GM12878 (cell line): ENCODE measurements at regions of chr10 and their contacts with region 1.

Region 1: GRCh38 chr10:60335708-60336107 is 54.0 kb downstream of the ANK3 start:
- DNase-seq: no peak
- ATAC-seq: peak; percentile 68
- H3K4me3 ChIP-seq: no peak overlapping the region
- H3K27ac ChIP-seq: no peak overlapping the region
- H3K4me1 ChIP-seq: no peaks in the 10 kb centered on the region
- H3K27me3 ChIP-seq: no peaks in the 10 kb centered on the region
- CTCF ChIP-seq: peak; percentile 26 to 48 (median 30); a peak in 4 of 6 replicates
- EP300 ChIP-seq: no peak
- POLR2A ChIP-seq: no peak
- RAD21 ChIP-seq: peak; percentile 64

Region 2: DNA sequence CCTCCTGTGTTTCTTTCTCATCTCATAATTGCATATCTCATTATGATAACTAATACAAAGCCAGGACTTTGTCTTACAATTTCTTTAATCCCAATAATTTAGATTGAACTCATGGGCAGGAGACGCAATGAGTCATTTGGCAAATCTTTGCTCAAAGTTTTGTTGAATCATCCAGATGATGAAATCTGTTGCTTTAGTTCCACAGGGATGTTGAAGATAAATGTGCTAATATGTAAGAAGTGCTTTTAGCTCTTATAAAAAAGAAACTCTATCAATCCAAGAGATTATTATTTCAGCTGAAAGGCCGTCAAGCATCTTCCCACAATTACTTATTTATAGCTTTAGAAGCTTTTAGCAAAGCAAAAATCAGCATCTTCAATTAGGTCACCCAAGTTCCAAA is 90.7 kb after region 1 on chr10:
- CTCF ChIA-PET with region 1: interaction called, 57 read pairs
- POLR2A ChIA-PET with region 1: no interaction called
- RAD21 ChIA-PET with region 1: interaction called, 3 read pairs
- SMC1A ChIA-PET with region 1: interaction called, 9 read pairs
- in situ Hi-C with region 1: no loop called
- intact Hi-C with region 1: no loop called
- DNase-seq: no peak
- ATAC-seq: no peak
- H3K4me3 ChIP-seq: no peak overlapping the region
- H3K27ac ChIP-seq: no peak overlapping the region
- H3K4me1 ChIP-seq: no peaks in the 10 kb centered on the region
- H3K27me3 ChIP-seq: no peaks in the 10 kb centered on the region
- CTCF ChIP-seq: no peak
- EP300 ChIP-seq: no peak
- POLR2A ChIP-seq: no peak
- RAD21 ChIP-seq: no peak

Region 3: GRCh38 chr10:60434418-60435046 is 98.8 kb after region 1 on chr10:
- CTCF ChIA-PET with region 1: interaction called, 57 read pairs
- POLR2A ChIA-PET with region 1: no interaction called
- RAD21 ChIA-PET with region 1: interaction called, 24 read pairs
- SMC1A ChIA-PET with region 1: interaction called, 29 read pairs
- in situ Hi-C with region 1: no loop called
- intact Hi-C with region 1: loop called (anchors 1 kb)
- DNase-seq: no peak
- ATAC-seq: peak; percentile 64
- H3K4me3 ChIP-seq: no peak overlapping the region
- H3K27ac ChIP-seq: no peak overlapping the region
- H3K4me1 ChIP-seq: no peaks in the 10 kb centered on the region
- H3K27me3 ChIP-seq: no peaks in the 10 kb centered on the region
- CTCF ChIP-seq: peak; percentile 42 to 69 (median 46); a peak in 5 of 6 replicates
- EP300 ChIP-seq: no peak
- POLR2A ChIP-seq: no peak
- RAD21 ChIP-seq: peak; percentile 93

Region 4: GRCh38 chr10:60444494-60445064 is 108.9 kb after region 1 on chr10:
- CTCF ChIA-PET with region 1: interaction called, 19 read pairs
- POLR2A ChIA-PET with region 1: no interaction called
- RAD21 ChIA-PET with region 1: no interaction called
- SMC1A ChIA-PET with region 1: interaction called, 4 read pairs
- in situ Hi-C with region 1: no loop called
- intact Hi-C with region 1: no loop called
- DNase-seq: no peak
- ATAC-seq: no peak
- H3K4me3 ChIP-seq: no peak overlapping the region
- H3K27ac ChIP-seq: no peak overlapping the region
- H3K4me1 ChIP-seq: no peaks in the 10 kb centered on the region
- H3K27me3 ChIP-seq: no peaks in the 10 kb centered on the region
- CTCF ChIP-seq: no peak; a peak in 1 of 6 replicates
- EP300 ChIP-seq: no peak
- POLR2A ChIP-seq: no peak
- RAD21 ChIP-seq: peak; percentile 30; the same call in 1 of the 2 replicates